Adrenal gland (tissue), 19 donors: ENCODE measurements at regions of chr3 and their contacts with region 1.

Region 1: DNA sequence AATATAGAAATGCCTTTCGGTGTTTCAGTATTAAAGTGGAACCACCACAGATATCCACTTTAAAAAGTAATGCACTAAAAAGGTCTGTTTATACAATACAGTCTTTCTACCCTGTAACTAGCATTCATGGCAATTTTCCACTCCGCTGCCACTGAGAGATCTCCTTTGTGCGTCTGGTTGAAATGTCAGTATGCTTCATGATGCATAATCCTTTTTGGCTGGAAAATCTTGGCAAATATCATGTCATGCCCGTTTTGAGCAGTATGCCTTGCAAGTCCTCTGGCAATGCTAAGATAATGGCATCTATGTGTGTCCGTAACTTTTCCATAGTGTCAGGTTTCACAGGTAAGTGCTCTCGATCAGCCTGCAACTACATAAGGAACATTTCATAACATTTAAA is 30.8 kb upstream of the ARF4 start:
- DNase-seq: no peak
- H3K4me3 ChIP-seq: no peak overlapping the region
- H3K27ac ChIP-seq: no peak overlapping the region
- H3K4me1 ChIP-seq: no peaks in the 10 kb centered on the region
- H3K27me3 ChIP-seq: no peaks in the 10 kb centered on the region
- CTCF ChIP-seq: no peak
- POLR2A ChIP-seq: no peak

Region 2: DNA sequence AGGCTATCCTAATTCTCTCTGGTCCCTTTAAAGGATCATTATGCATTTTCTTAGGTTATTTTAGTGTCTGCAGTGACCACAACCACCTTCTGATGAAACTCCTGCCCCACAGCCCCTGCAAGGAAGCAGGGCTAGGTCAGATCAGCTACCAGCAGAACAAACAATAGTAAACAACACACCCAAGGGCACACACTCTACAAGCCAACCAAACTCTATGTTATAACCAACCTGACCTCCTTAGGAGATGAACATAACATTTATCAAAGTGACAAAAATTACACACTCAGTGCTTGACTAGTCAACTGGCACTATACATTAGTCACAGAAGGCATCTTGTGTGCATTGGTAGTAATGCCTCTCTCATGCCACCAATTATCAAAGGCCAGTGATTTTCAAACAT is 47.6 kb after region 1 on chr3:
- intact Hi-C with region 1: loop called in 1 of 2 experiments (anchors 10 kb)
- DNase-seq: no peak
- H3K4me3 ChIP-seq: no peak overlapping the region
- H3K27ac ChIP-seq: no peak overlapping the region
- H3K4me1 ChIP-seq: peaks cover 4 to 27% of the 10 kb centered on the region in 2 donors
- H3K27me3 ChIP-seq: no peaks in the 10 kb centered on the region
- CTCF ChIP-seq: no peak
- POLR2A ChIP-seq: no peak

Region 3: DNA sequence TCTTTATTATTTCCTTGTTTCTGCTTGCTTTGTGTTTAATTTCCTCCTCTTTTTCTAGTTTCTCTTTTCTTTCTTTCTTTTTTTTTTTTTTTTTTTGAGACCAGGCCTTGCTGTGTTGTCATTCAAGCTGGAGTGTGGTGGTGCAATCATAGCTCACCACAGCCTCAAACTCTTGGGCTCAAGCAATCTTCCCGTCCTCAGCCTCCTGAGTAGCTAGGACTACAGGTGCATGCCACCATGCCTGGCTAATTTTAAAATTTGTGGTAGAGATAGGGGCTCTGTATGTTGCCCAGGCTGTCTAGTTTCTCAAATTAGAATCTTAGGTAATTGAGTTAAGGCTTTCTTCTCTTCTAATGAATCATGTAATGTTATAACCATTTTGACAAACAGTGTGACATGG is 150.5 kb after region 1 on chr3:
- intact Hi-C with region 1: no loop called
- DNase-seq: peak in 1 of 7 donors; percentile 21
- H3K4me3 ChIP-seq: no peak overlapping the region
- H3K27ac ChIP-seq: no peak overlapping the region
- H3K4me1 ChIP-seq: peaks cover 6 to 17% of the 10 kb centered on the region in 2 donors
- H3K27me3 ChIP-seq: no peaks in the 10 kb centered on the region
- CTCF ChIP-seq: no peak
- POLR2A ChIP-seq: no peak

Region 4: DNA sequence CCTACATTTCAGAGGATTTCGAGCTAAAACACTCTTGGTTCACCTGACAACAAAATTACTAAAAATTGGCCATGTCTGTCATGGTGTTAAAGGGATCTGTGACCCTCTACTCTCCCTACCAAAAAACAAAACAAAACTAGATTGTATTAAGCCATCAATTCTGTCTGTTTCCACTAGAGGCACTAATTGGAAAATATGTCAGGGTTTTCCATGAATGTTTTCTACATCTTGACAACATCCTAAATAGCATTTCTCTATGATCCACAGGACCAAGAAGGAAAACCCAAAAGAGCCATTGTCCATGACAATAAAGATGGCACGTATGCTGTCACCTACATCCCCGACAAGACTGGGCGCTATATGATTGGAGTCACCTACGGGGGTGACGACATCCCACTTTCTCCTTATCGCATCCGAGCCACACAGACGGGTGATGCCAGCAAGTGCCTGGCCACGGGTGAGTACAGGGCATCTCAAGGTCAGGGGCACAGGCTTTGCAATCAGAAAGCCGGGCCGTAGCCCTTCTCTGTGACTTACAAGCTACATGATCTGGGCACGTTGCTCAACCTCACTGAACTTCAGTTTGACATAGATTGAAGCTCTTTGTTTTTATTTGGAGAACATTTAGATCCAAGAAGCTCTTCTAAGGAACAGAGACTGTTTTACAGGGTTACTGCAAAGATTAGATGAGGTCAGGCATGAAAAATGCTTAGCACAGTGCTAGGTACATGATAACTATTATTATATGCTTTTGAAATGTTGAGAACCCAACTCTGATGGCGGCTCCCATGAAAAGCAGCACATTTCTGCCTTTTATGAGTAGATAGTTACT is 508.0 kb after region 1 on chr3:
- intact Hi-C with region 1: no loop called
- DNase-seq: peak; percentile 45 to 90 (median 85)
- H3K4me3 ChIP-seq: no peak overlapping the region
- H3K27ac ChIP-seq: peak overlapping the region in 4 of 5 donors; percentile 30 to 72 (median 52)
- H3K4me1 ChIP-seq: peaks cover 0 to 6% of the 10 kb centered on the region in 2 donors
- H3K27me3 ChIP-seq: no peaks in the 10 kb centered on the region
- CTCF ChIP-seq: peak; percentile 25 to 57 (median 42)
- POLR2A ChIP-seq: no peak